PC-3 (cell line): ENCODE measurements at regions of chr11 and their contacts with region 1.

Region 1: GRCh38 chr11:16881074-16881709 is 133.0 kb downstream of the PLEKHA7 start:
- DNase-seq: peak; percentile 83
- ATAC-seq: peak; percentile 80
- H3K4me3 ChIP-seq: peak overlapping the region; percentile 29; the same call in 1 of the 2 replicates
- H3K27ac ChIP-seq: 0 out of 2 replicates have a peak overlapping the region, but pooled peaks have one; percentile 16
- H3K4me1 ChIP-seq: peaks cover 32% of the 10 kb centered on the region
- H3K27me3 ChIP-seq: no peaks in the 10 kb centered on the region
- CTCF ChIP-seq: peak; percentile 54

Region 2: GRCh38 chr11:16632295-16633200 is 248.6 kb before region 1 on chr11:
- CTCF ChIA-PET with region 1: no interaction called
- POLR2A ChIA-PET with region 1: no interaction called
- intact Hi-C with region 1: loop called (anchors 5 kb)
- DNase-seq: peak; percentile 66
- ATAC-seq: peak; percentile 79
- H3K4me3 ChIP-seq: peak overlapping the region; percentile 52; the same call in 1 of the 2 replicates
- H3K27ac ChIP-seq: no peak overlapping the region
- H3K4me1 ChIP-seq: no peaks in the 10 kb centered on the region
- H3K27me3 ChIP-seq: no peaks in the 10 kb centered on the region
- CTCF ChIP-seq: peak; percentile 69

Region 3: GRCh38 chr11:16785520-16786128 is 95.6 kb before region 1 on chr11:
- CTCF ChIA-PET with region 1: interaction called, 6 read pairs
- POLR2A ChIA-PET with region 1: no interaction called
- intact Hi-C with region 1: loop called (anchors 1 kb)
- DNase-seq: peak; percentile 71
- ATAC-seq: peak; percentile 39
- H3K4me3 ChIP-seq: no peak overlapping the region
- H3K27ac ChIP-seq: no peak overlapping the region
- H3K4me1 ChIP-seq: peaks cover 37% of the 10 kb centered on the region
- H3K27me3 ChIP-seq: no peaks in the 10 kb centered on the region
- CTCF ChIP-seq: peak; percentile 83

Region 4: DNA sequence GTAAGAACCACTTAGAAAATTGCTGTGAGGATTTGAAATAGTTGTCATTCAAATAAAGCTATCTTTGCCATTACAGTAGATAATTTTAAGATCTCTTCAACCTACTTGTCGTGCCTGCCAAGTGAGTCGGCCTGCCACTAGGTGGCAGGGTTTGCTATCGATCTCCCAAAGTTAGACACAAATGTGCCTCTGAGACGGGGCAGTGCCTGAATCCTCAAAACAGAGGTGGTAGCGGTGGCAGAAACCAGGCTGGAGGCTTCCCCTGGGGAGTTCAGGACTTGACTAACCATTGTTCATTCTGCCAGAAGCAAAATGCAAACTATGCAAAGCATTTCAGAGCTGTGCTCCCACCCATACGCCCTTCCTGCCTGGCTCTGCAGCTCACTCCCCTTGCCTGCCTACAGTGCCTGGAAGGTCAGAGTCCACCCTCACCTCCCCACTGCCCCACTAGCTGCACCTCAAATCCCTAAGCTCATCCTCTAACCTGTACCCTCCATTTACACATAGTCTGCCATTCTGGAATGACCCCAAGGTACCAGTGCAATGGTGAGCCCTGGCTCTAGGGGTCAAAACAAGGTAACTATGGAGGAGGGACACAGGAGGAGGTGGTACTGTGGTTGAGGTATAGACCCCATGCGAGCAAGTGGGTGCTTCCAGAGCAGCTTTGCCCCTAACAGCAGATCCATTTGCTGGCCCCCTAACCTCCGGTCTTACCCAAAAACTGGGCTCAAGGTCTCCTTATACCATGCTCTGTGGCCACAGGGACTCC is 60.7 kb before region 1 on chr11:
- CTCF ChIA-PET with region 1: interaction called, 20 read pairs
- POLR2A ChIA-PET with region 1: no interaction called
- intact Hi-C with region 1: loop called (anchors 1 kb)
- DNase-seq: peak; percentile 86
- ATAC-seq: peak; percentile 77
- H3K4me3 ChIP-seq: no peak overlapping the region
- H3K27ac ChIP-seq: no peak overlapping the region
- H3K4me1 ChIP-seq: peaks cover 29% of the 10 kb centered on the region
- H3K27me3 ChIP-seq: no peaks in the 10 kb centered on the region
- CTCF ChIP-seq: peak; percentile 93

Region 5: GRCh38 chr11:16841984-16842383 is 39.2 kb before region 1 on chr11:
- CTCF ChIA-PET with region 1: no interaction called
- POLR2A ChIA-PET with region 1: no interaction called
- intact Hi-C with region 1: loop called (anchors 1 kb)
- DNase-seq: no peak
- ATAC-seq: no peak
- H3K4me3 ChIP-seq: no peak overlapping the region
- H3K27ac ChIP-seq: no peak overlapping the region
- H3K4me1 ChIP-seq: no peaks in the 10 kb centered on the region
- H3K27me3 ChIP-seq: no peaks in the 10 kb centered on the region
- CTCF ChIP-seq: no peak

Region 6: DNA sequence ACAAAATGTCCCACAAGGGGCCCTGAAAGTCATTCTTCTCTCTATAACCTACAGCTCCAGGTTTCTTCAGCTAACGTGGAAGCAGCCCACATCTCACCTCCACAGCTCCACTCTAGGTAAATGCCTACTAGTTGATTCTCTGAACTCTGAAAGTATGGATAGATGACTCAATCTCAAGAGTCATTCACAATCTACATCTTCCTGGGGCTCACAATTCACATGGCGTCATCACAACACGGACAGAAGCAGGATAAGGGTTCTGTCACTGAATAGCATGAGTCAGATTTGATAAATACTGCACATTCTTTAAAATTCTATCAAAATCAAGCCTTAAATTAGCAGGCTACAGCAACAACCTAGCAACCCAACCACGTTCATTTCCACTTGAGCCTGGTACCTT is 36.7 kb after region 1 on chr11:
- CTCF ChIA-PET with region 1: interaction called, 3 read pairs
- POLR2A ChIA-PET with region 1: no interaction called
- intact Hi-C with region 1: loop called (anchors 1 kb)
- DNase-seq: peak; percentile 71
- ATAC-seq: peak; percentile 55
- H3K4me3 ChIP-seq: peak overlapping the region; percentile 33; the same call in 1 of the 2 replicates
- H3K27ac ChIP-seq: peak overlapping the region; percentile 88
- H3K4me1 ChIP-seq: peaks cover 39% of the 10 kb centered on the region
- H3K27me3 ChIP-seq: no peaks in the 10 kb centered on the region
- CTCF ChIP-seq: no peak

Region 7: DNA sequence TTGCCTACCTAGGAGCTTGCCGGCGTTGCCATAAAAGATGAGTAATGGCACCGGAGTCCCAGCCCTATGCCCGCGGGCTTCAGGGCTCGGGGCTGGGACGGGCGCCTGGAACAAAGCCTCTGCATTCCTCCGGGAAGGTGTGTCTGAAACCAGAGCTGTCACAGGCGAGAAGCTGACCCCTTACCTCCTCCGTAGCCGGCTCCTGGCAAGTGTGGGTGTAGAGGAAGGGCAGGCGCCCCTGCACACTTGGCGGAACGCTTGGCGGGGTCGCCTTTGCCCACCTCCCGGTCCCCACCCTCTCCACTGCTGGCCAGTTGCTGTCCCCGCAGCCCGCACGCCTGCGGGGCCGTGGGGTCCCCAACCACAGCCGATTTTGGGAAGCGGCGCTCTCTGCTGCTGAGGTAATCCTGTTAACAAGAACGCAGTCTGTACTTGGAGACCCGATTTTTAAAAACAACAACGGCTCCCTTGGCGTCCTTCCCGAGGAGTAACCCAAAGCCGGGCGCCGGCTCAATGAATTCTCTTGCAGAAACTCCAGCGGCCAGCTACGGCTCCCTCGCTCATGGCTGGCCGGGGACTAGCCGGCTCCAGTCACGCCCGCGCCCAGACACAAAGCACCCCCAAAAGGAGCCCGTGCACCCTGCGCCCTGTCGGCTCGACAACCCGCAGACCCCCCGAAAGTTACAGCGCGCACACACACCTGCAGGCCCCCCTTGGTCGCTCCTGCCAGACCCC is 43.8 kb after region 1 on chr11:
- CTCF ChIA-PET with region 1: interaction called, 4 read pairs
- POLR2A ChIA-PET with region 1: interaction called, 3 read pairs
- intact Hi-C with region 1: loop called (anchors 2 kb)
- DNase-seq: peak; percentile 96
- ATAC-seq: peak; percentile 86
- H3K4me3 ChIP-seq: peak overlapping the region; percentile 89
- H3K27ac ChIP-seq: peak overlapping the region; percentile 69
- H3K4me1 ChIP-seq: peaks cover 31% of the 10 kb centered on the region
- H3K27me3 ChIP-seq: no peaks in the 10 kb centered on the region
- CTCF ChIP-seq: no peak